ENCODE measurements at regions of chr4 and their contacts with region 1.

Region 1: GRCh38 chr4:152500800-152501434 is 35.0 kb downstream of the FBXW7 start:
- DNase-seq: peak; percentile 74
- ATAC-seq: peak; percentile 77
- H3K4me3 ChIP-seq: peak overlapping the region; percentile 21; the same call in 1 of the 2 replicates
- H3K27ac ChIP-seq: peak overlapping the region; percentile 57
- H3K4me1 ChIP-seq: peaks cover 18% of the 10 kb centered on the region
- H3K27me3 ChIP-seq: no peaks in the 10 kb centered on the region
- CTCF ChIP-seq: peak; percentile 61 to 85 (median 83)
- EP300 ChIP-seq: no peak
- POLR2A ChIP-seq: no peak
- RAD21 ChIP-seq: peak; percentile 87

Region 2: GRCh38 chr4:152408514-152409327 is 92.2 kb before region 1 on chr4:
- CTCF ChIA-PET with region 1: interaction called, 18 read pairs
- POLR2A ChIA-PET with region 1: no interaction called
- RAD21 ChIA-PET with region 1: interaction called, 19 read pairs
- SMC1A ChIA-PET with region 1: interaction called, 13 read pairs
- in situ Hi-C with region 1: no loop called
- intact Hi-C with region 1: no loop called
- DNase-seq: no peak
- ATAC-seq: peak; percentile 86
- H3K4me3 ChIP-seq: no peak overlapping the region
- H3K27ac ChIP-seq: no peak overlapping the region
- H3K4me1 ChIP-seq: no peaks in the 10 kb centered on the region
- H3K27me3 ChIP-seq: no peaks in the 10 kb centered on the region
- CTCF ChIP-seq: peak; percentile 53 to 58 (median 58); a peak in 5 of 6 replicates
- EP300 ChIP-seq: no peak
- POLR2A ChIP-seq: no peak
- RAD21 ChIP-seq: peak; percentile 72

Region 3: GRCh38 chr4:152468408-152468807 is 32.5 kb before region 1 on chr4:
- CTCF ChIA-PET with region 1: interaction called, 13 read pairs
- POLR2A ChIA-PET with region 1: interaction called, 8 read pairs
- RAD21 ChIA-PET with region 1: interaction called, 5 read pairs
- SMC1A ChIA-PET with region 1: interaction called, 15 read pairs
- in situ Hi-C with region 1: no loop called
- intact Hi-C with region 1: no loop called
- DNase-seq: no peak
- ATAC-seq: no peak
- H3K4me3 ChIP-seq: no peak overlapping the region
- H3K27ac ChIP-seq: no peak overlapping the region
- H3K4me1 ChIP-seq: peaks cover 11% of the 10 kb centered on the region
- H3K27me3 ChIP-seq: no peaks in the 10 kb centered on the region
- CTCF ChIP-seq: no peak
- EP300 ChIP-seq: no peak
- POLR2A ChIP-seq: no peak
- RAD21 ChIP-seq: no peak

Region 4: GRCh38 chr4:152525873-152526272 is 25.0 kb after region 1 on chr4:
- CTCF ChIA-PET with region 1: interaction called, 146 read pairs
- POLR2A ChIA-PET with region 1: interaction called, 93 read pairs
- RAD21 ChIA-PET with region 1: interaction called, 224 read pairs
- SMC1A ChIA-PET with region 1: interaction called, 197 read pairs
- in situ Hi-C with region 1: no loop called
- intact Hi-C with region 1: no loop called
- DNase-seq: no peak
- ATAC-seq: peak; percentile 55
- H3K4me3 ChIP-seq: peak overlapping the region; percentile 46; the same call in 1 of the 2 replicates
- H3K27ac ChIP-seq: peak overlapping the region; percentile 55
- H3K4me1 ChIP-seq: peaks cover 53% of the 10 kb centered on the region
- H3K27me3 ChIP-seq: no peaks in the 10 kb centered on the region
- CTCF ChIP-seq: no peak
- EP300 ChIP-seq: no peak
- POLR2A ChIP-seq: no peak
- RAD21 ChIP-seq: no peak

Region 5: DNA sequence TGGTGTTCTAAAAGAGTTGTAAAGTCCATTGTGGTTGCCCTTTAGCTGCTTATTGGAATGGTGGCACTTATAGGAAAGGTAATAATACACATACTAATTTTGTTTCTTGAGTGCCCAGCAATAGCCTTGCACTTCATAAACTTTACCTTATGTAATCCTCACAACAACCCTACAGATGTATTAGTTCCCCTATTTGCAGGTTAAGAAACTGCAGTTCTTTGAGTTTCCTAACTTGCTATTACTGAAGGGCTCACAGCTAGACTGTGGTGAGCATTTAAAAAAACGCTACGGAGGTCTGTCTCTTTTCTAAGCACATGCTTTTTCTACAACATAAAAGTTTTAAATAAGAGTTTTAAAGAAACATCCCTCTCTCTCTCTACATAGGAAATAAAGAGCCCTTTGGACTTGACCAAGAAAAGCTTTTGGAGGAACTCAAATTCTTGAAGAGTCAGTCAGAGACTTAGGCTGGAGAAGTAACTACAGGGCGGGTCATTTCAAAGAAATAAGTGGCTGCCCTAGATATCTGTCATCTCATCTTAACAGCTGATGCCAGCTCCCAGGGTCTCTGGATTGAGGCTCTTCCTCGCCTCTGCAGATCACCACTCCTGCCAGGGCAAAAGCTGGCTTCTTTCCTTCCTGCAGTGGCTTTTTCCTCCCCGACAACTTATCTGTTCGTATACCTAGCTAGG is 76.9 kb after region 1 on chr4:
- CTCF ChIA-PET with region 1: interaction called, 14 read pairs
- POLR2A ChIA-PET with region 1: no interaction called
- RAD21 ChIA-PET with region 1: interaction called, 12 read pairs
- SMC1A ChIA-PET with region 1: interaction called, 24 read pairs
- in situ Hi-C with region 1: no loop called
- intact Hi-C with region 1: no loop called
- DNase-seq: no peak
- ATAC-seq: peak; percentile 94
- H3K4me3 ChIP-seq: no peak overlapping the region
- H3K27ac ChIP-seq: no peak overlapping the region
- H3K4me1 ChIP-seq: no peaks in the 10 kb centered on the region
- H3K27me3 ChIP-seq: no peaks in the 10 kb centered on the region
- CTCF ChIP-seq: 0 out of 6 replicates have a peak, but pooled peaks of 1 of the 3 experiments have one; percentile 5
- EP300 ChIP-seq: no peak
- POLR2A ChIP-seq: no peak
- RAD21 ChIP-seq: no peak

Region 6: GRCh38 chr4:152634110-152634760 is 133.3 kb after region 1 on chr4:
- CTCF ChIA-PET with region 1: interaction called, 465 read pairs
- POLR2A ChIA-PET with region 1: interaction called, 54 read pairs
- RAD21 ChIA-PET with region 1: interaction called, 513 read pairs
- SMC1A ChIA-PET with region 1: interaction called, 555 read pairs
- in situ Hi-C with region 1: no loop called
- intact Hi-C with region 1: no loop called
- DNase-seq: no peak
- ATAC-seq: no peak
- H3K4me3 ChIP-seq: no peak overlapping the region
- H3K27ac ChIP-seq: no peak overlapping the region
- H3K4me1 ChIP-seq: peaks cover 25% of the 10 kb centered on the region
- H3K27me3 ChIP-seq: no peaks in the 10 kb centered on the region
- CTCF ChIP-seq: no peak
- EP300 ChIP-seq: no peak
- POLR2A ChIP-seq: no peak
- RAD21 ChIP-seq: no peak

Region 7: GRCh38 chr4:152679414-152680281 is 178.7 kb after region 1 on chr4 and contains the start of gene TMEM154:
- CTCF ChIA-PET with region 1: interaction called, 33 read pairs
- POLR2A ChIA-PET with region 1: interaction called, 4 read pairs
- RAD21 ChIA-PET with region 1: interaction called, 31 read pairs
- SMC1A ChIA-PET with region 1: interaction called, 48 read pairs
- in situ Hi-C with region 1: no loop called
- intact Hi-C with region 1: no loop called
- DNase-seq: no peak
- ATAC-seq: peak; percentile 80
- H3K4me3 ChIP-seq: peak within 1 kb of the TSS; percentile 89
- H3K27ac ChIP-seq: peak within 1 kb of the TSS; percentile 54
- H3K4me1 ChIP-seq: peaks cover 41% of the 10 kb centered on the region
- H3K27me3 ChIP-seq: no peaks in the 10 kb centered on the region
- CTCF ChIP-seq: 0 out of 6 replicates have a peak, but pooled peaks of 1 of the 3 experiments have one; percentile 7
- EP300 ChIP-seq: 0 out of 4 replicates have a peak, but pooled peaks of 1 of the 2 experiments have one; percentile 20
- POLR2A ChIP-seq: peak; percentile 95
- RAD21 ChIP-seq: no peak
- polyA plus RNA-seq, gene TMEM154: 9.3 to 17.6 TPM

Region 8: GRCh38 chr4:152864361-152864760 is 363.4 kb after region 1 on chr4:
- CTCF ChIA-PET with region 1: no interaction called
- POLR2A ChIA-PET with region 1: no interaction called
- RAD21 ChIA-PET with region 1: no interaction called
- SMC1A ChIA-PET with region 1: no interaction called
- in situ Hi-C with region 1: no loop called
- intact Hi-C with region 1: no loop called
- DNase-seq: no peak
- ATAC-seq: no peak
- H3K4me3 ChIP-seq: no peak overlapping the region
- H3K27ac ChIP-seq: no peak overlapping the region
- H3K4me1 ChIP-seq: no peaks in the 10 kb centered on the region
- H3K27me3 ChIP-seq: no peaks in the 10 kb centered on the region
- CTCF ChIP-seq: no peak
- EP300 ChIP-seq: no peak
- POLR2A ChIP-seq: no peak
- RAD21 ChIP-seq: no peak

Region 9: GRCh38 chr4:153060196-153060595 is 559.3 kb after region 1 on chr4:
- CTCF ChIA-PET with region 1: no interaction called
- POLR2A ChIA-PET with region 1: no interaction called
- RAD21 ChIA-PET with region 1: no interaction called
- SMC1A ChIA-PET with region 1: no interaction called
- in situ Hi-C with region 1: no loop called
- intact Hi-C with region 1: no loop called
- DNase-seq: no peak
- ATAC-seq: no peak
- H3K4me3 ChIP-seq: no peak overlapping the region
- H3K27ac ChIP-seq: no peak overlapping the region
- H3K4me1 ChIP-seq: no peaks in the 10 kb centered on the region
- H3K27me3 ChIP-seq: no peaks in the 10 kb centered on the region
- CTCF ChIP-seq: no peak
- EP300 ChIP-seq: no peak
- POLR2A ChIP-seq: no peak
- RAD21 ChIP-seq: no peak

Measured in GM12878 (cell line).